Body of pancreas (tissue), 4 donors: ENCODE measurements at regions of chr14 and their contacts with region 1.

Region 1: GRCh38 chr14:101953151-101953550 is 11.2 kb upstream of the DYNC1H1 start:
- DNase-seq: no peak
- ATAC-seq: no peak
- H3K4me3 ChIP-seq: no peak overlapping the region
- H3K27ac ChIP-seq: no peak overlapping the region
- H3K4me1 ChIP-seq: peaks cover 30% of the 10 kb centered on the region
- H3K27me3 ChIP-seq: no peaks in the 10 kb centered on the region
- CTCF ChIP-seq: no peak
- POLR2A ChIP-seq: no peak

Region 2: GRCh38 chr14:101761032-101761880 is 191.9 kb before region 1 on chr14 and contains the start of gene PPP2R5C:
- intact Hi-C with region 1: no loop called
- DNase-seq: peak; percentile 93 to 95 (median 94)
- ATAC-seq: peak; percentile 80
- H3K4me3 ChIP-seq: peak within 1 kb of the TSS; percentile 86 to 89
- H3K27ac ChIP-seq: peak within 1 kb of the TSS; percentile 95 to 98 (median 96)
- H3K4me1 ChIP-seq: peaks cover 21% of the 10 kb centered on the region
- H3K27me3 ChIP-seq: no peaks in the 10 kb centered on the region
- CTCF ChIP-seq: peak in 1 of 7 experiments; percentile 7
- POLR2A ChIP-seq: peak; percentile 53 to 89 (median 78)
- total RNA-seq, gene PPP2R5C: 59.0 to 77.6 TPM

Region 3: DNA sequence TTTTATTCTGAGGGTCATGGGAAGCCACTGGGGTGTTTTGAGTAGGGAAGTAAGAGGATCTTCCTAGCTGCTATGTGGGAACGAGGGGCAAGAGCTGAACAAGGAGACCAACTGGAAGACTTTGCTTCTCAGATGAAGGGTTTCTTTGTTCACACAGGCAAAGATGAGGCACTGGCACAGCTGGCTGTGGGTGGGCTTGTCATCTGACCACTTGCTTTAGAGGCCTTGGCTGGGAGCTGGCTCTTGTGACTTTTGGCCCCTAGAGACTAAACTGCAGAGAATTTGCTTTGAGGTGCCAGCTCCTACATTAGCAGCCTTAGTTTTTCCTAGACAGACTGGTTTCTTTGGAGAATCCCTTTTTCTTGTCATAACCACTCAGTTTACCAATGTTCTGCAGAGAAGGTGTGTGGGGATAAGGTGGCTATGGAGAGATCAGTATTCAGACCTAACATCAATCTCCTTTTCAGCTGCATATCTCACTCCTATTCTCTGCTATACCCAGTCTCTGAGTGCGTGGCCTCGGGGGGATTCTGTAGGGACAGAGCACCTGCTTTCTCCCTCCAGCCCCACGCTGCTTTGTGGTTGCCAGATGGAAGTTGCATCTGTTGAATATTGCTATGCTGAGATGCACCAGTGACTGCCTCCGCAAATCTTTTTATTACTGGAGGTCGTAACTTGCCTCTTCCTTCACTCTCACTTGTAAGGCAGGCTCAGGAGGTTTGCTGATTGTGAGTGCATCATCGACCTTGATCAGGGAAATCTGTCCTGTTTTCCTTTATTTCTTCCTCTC is 178.9 kb before region 1 on chr14:
- intact Hi-C with region 1: loop called (anchors 10 kb)
- DNase-seq: no peak
- ATAC-seq: no peak
- H3K4me3 ChIP-seq: no peak overlapping the region
- H3K27ac ChIP-seq: peak overlapping the region in 2 of 4 donors; percentile 56 to 72
- H3K4me1 ChIP-seq: peaks cover 14% of the 10 kb centered on the region
- H3K27me3 ChIP-seq: no peaks in the 10 kb centered on the region
- CTCF ChIP-seq: no peak
- POLR2A ChIP-seq: no peak

Region 4: DNA sequence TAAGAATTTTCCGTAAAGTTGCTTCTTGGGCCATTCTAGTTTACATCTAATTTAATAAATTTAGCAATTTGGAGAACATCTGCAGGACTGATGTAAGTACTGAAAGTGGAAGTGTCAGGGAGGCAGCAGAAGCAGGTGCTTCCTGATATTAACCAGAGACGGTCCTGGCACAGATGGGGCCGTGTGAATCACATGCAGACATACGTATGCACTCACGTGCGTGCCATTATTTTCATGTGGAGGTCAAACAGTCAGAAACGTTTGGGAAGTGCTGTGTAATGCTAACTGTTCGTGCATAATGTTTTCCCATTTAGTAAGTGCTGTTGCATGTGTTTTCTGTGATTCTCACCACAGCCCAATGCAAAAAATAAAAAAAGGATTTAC is 76.6 kb before region 1 on chr14:
- intact Hi-C with region 1: no loop called
- DNase-seq: peak; percentile 29 to 84 (median 48)
- ATAC-seq: no peak
- H3K4me3 ChIP-seq: no peak overlapping the region
- H3K27ac ChIP-seq: peak overlapping the region in 2 of 4 donors; percentile 80 to 84
- H3K4me1 ChIP-seq: peaks cover 72% of the 10 kb centered on the region
- H3K27me3 ChIP-seq: no peaks in the 10 kb centered on the region
- CTCF ChIP-seq: no peak
- POLR2A ChIP-seq: no peak

Region 5: DNA sequence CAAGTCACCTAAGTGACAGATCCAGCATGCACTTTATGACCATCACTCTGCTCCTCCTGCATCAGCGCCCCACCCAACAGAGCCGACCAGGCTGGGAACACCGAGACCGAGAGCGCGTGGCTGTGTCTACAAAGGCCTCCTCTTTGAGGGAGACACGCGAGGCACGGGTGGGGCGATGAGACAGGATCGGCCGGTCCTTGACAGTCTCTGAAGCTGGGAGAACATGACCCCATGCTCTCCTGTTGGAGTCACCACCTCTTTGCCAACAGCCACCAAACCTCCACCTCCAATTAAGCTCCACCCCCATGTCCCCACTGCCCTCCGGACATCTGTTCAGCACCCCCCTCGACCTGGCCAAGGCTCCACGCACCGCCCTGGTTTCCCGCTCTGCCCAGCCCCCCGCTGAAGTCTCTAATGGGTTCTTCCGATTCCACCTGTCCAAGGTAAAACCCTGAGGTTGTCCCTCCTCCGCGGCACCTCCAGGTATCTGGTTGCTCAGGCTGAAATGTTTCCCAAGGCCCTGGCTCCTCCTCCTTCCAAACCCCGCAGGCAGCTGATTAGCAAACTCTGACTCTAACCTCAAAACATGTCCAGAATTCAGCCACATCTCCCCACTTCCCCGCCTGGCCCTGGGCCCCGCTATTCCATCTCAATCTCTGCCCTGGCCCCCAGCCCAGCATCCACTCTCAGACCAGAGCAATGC is 102.2 kb after region 1 on chr14:
- intact Hi-C with region 1: no loop called
- DNase-seq: peak in 3 of 4 donors; percentile 39 to 52 (median 43)
- ATAC-seq: peak; percentile 50
- H3K4me3 ChIP-seq: no peak overlapping the region
- H3K27ac ChIP-seq: no peak overlapping the region
- H3K4me1 ChIP-seq: peaks cover 8% of the 10 kb centered on the region
- H3K27me3 ChIP-seq: no peaks in the 10 kb centered on the region
- CTCF ChIP-seq: no peak
- POLR2A ChIP-seq: no peak